ENCODE measurements at regions of chr4 and their contacts with region 1.

Region 1: GRCh38 chr4:7802093-7802726 is 137.5 kb downstream of the AFAP1 start:
- DNase-seq: peak; percentile 46 to 70
- ATAC-seq: peak; percentile 60 to 68
- H3K4me3 ChIP-seq: no peak overlapping the region
- H3K27ac ChIP-seq: peak overlapping the region in 1 of 4 donors; percentile 33
- H3K4me1 ChIP-seq: peaks cover 26 to 28% of the 10 kb centered on the region in 2 donors
- H3K27me3 ChIP-seq: no peaks in the 10 kb centered on the region
- CTCF ChIP-seq: peak; percentile 80 to 96 (median 84)
- POLR2A ChIP-seq: no peak

Region 2: DNA sequence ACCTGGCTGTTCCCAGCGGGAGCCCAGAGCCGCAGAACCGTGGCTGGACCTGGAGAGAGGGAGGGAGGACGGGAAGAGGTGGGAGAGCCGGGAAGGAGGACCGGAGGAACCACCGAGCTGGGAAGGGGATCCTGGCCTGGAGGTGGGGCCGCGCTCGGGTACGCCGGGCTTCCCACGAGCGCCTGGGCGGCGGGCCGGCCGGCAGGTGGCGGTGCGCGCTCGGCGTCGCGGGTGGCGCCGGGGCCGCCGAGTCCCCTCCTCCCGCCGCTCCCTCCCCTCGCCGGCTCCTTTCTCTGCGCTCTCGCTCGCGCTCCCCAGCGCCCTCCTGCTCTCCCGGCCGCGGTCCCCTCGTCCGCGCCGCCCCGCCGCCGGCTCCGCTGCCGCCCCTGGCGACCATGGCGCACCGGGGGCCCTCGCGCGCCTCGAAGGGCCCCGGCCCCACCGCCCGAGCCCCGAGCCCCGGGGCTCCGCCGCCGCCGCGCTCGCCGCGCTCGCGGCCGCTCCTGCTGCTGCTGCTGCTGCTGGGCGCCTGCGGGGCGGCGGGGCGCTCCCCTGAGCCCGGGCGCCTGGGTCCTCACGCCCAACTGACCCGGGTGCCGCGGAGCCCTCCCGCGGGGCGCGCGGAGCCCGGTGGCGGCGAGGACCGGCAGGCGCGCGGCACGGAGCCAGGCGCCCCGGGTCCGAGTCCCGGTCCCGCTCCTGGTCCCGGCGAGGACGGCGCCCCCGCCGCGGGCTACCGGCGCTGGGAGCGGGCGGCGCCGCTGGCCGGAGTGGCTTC is 609.8 kb before region 1 on chr4 and contains the start of gene SORCS2:
- in situ Hi-C with region 1: no loop called
- intact Hi-C with region 1: loop called (anchors 5 kb)
- DNase-seq: peak; percentile 22 to 41
- ATAC-seq: peak; percentile 91 to 92
- H3K4me3 ChIP-seq: peak within 1 kb of the TSS; percentile 27 to 44 (median 37)
- H3K27ac ChIP-seq: no peak within 1 kb of the TSS
- H3K4me1 ChIP-seq: peaks cover 6 to 7% of the 10 kb centered on the region in 2 donors
- H3K27me3 ChIP-seq: peaks cover 17 to 46% (median 26%) of the 10 kb centered on the region in 3 donors
- CTCF ChIP-seq: peak; percentile 49 to 93 (median 90)
- POLR2A ChIP-seq: no peak
- total RNA-seq, gene SORCS2: 0.07 to 1.2 (median 0.11) TPM

Region 3: DNA sequence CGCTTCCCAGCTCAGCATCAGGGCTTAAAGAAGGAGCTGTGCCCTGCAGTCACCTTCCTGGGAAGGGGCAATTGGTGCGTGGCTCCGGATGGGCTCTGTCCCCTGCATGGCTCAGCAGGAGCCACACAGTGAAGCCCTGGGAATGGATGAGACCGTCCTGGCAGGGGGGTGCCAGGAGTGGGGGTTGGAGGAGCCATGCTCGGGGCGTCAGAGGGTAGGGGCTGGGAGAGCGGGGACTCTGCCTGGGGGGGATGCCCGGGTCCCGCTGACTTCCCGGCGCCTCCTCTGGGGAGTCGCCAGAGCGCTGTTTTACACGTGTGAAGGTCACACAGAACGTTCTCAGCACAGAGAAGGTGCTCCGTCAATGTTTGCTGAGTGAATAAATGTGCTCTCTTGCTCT is 46.6 kb before region 1 on chr4:
- in situ Hi-C with region 1: no loop called
- intact Hi-C with region 1: no loop called
- DNase-seq: no peak
- ATAC-seq: no peak
- H3K4me3 ChIP-seq: no peak overlapping the region
- H3K27ac ChIP-seq: no peak overlapping the region
- H3K4me1 ChIP-seq: peaks cover 18% of the 10 kb centered on the region in 2 donors
- H3K27me3 ChIP-seq: no peaks in the 10 kb centered on the region
- CTCF ChIP-seq: no peak
- POLR2A ChIP-seq: no peak

Region 4: DNA sequence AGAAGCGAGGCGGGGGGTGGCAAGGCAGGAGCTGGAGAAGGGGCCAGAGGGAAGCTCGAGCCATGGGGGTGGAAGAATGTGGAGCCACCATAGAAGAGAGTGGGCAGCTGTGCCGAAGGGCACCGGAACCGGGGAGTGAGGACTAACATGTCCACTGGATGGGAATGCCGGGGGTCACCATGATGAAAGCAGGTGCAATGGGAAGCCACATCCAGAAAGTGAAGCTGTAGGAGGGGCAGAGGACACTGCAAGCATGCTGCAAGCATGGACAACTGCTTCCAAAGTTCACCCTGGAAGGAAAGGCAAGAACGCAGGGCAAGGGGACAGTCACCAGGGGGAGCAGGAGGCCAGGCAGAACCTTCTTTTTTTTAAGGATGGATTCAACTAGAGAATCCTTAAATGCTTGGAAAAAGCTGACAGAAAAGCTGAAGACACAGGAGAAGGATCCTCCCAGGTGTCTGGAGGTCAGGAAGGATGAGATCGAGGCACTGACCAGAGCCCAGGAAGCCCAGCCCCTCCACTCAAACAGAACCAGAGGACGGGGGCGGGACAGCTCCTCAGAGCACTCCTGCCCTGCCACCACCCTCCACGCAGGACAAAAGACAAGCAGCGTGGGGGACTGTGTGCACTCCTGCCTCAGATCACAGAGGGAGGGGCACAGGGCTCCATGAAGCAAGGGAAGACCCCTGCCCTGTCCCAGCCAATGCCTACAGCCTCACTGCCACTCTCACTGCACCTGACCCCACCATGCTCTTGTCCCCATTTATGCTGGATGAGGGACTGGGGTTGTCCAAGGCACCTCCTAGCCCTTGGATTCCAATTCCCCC is 31.8 kb before region 1 on chr4:
- in situ Hi-C with region 1: no loop called
- intact Hi-C with region 1: loop called (anchors 2 kb)
- DNase-seq: no peak
- ATAC-seq: no peak
- H3K4me3 ChIP-seq: no peak overlapping the region
- H3K27ac ChIP-seq: no peak overlapping the region
- H3K4me1 ChIP-seq: no peaks in the 10 kb centered on the region
- H3K27me3 ChIP-seq: no peaks in the 10 kb centered on the region
- CTCF ChIP-seq: peak in 3 of 5 experiments; percentile 23 to 34 (median 25)
- POLR2A ChIP-seq: no peak

Region 5: DNA sequence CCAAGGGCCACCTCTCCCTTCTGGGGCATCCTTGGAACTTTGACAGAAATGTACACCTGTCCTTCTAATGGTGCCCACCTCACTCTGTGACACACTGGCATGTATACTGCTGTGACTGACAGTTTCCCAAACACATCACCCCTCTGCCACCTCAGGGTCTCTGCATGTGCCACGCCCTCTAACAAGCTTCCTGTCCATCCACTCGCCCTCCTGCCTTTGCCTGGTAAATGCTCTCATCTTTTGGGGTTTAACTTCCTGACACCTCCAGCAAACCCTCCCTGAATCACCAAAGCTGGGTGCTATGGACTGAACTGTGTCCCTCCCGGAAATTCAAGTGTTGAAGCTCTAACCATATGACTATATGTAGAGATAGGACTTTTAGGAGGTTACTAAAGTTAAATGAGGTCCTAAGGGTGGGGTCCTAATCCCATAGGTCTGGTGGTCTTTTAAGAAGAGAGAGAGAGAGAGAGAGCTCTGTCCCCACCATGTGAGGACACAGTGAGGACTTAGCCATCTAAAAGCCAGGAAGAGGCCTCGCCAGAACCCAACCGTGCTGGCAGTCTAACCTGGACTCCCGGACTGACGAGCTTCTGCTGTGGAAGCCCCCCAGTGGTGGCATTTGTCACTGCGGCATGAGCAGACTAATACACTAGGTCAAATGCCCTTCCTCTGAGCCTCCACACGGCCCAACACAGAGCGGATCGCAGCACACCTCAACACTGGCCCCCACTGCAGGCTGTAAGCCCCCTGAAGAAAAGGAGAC is 41.8 kb after region 1 on chr4:
- in situ Hi-C with region 1: no loop called
- intact Hi-C with region 1: loop called (anchors 1 kb)
- DNase-seq: peak; percentile 41 to 78
- ATAC-seq: peak; percentile 61 to 76
- H3K4me3 ChIP-seq: no peak overlapping the region
- H3K27ac ChIP-seq: peak overlapping the region in 1 of 4 donors; percentile 74
- H3K4me1 ChIP-seq: peaks cover 0 to 6% of the 10 kb centered on the region in 2 donors
- H3K27me3 ChIP-seq: no peaks in the 10 kb centered on the region
- CTCF ChIP-seq: peak; percentile 67 to 83 (median 74)
- POLR2A ChIP-seq: no peak

Region 6: GRCh38 chr4:7924163-7924562 is 122.0 kb after region 1 on chr4:
- in situ Hi-C with region 1: loop called in 3 of 4 experiments (anchors 5 to 10 kb)
- intact Hi-C with region 1: loop called (anchors 1 kb)
- DNase-seq: no peak
- ATAC-seq: no peak
- H3K4me3 ChIP-seq: no peak overlapping the region
- H3K27ac ChIP-seq: no peak overlapping the region
- H3K4me1 ChIP-seq: peaks cover 0 to 3% of the 10 kb centered on the region in 2 donors
- H3K27me3 ChIP-seq: no peaks in the 10 kb centered on the region
- CTCF ChIP-seq: no peak
- POLR2A ChIP-seq: no peak

Region 7: DNA sequence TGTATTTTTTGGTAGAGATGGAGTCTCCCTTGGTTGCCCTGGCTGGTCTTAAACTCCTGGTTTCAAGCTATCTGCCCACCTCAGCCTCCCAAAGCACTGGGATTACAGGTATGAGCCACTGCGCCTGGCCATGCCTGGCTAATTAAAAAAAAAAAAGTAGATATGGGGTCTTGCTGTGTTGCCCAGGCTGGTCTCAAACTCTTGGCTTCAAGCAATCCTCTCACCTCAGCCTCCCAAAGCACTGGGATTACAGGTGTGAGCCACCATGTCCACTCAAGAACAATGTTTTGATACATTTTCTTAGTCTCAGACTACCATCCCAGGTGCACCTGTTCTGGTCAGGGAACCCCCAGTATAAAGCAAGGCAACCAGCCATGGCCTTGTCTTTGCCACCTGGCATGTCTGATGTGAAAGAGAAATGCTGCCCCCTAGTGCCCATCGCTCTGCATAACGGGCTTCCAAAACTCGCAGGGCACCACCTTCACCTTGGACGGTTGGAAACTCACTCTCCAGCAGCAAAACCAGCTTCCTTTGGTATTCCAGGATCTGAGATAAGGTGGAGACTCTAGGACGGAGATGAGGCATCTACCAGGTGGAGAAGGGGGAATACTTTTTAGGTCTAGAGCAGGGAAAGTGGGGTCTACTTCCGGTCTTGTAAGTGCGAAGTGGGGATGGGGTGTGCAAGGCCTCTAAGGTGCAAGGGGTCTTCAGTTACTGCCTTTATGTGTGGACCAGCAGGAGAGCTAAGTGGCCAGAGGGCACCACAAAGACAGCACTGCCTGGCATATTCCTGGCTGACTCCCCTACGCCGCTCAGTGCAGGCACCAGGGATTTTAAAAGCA is 185.2 kb after region 1 on chr4:
- in situ Hi-C with region 1: loop called in 3 of 4 experiments (anchors 5 to 25 kb)
- intact Hi-C with region 1: loop called (anchors 2 kb)
- DNase-seq: peak; percentile 35 to 75
- ATAC-seq: peak; percentile 42 to 60
- H3K4me3 ChIP-seq: no peak overlapping the region
- H3K27ac ChIP-seq: peak overlapping the region; percentile 58 to 66 (median 65)
- H3K4me1 ChIP-seq: peaks cover 19 to 21% of the 10 kb centered on the region in 2 donors
- H3K27me3 ChIP-seq: no peaks in the 10 kb centered on the region
- CTCF ChIP-seq: peak; percentile 77 to 85 (median 84)
- POLR2A ChIP-seq: no peak

Region 8: GRCh38 chr4:8428293-8429097 is 626.3 kb after region 1 on chr4:
- in situ Hi-C with region 1: loop called in 1 of 4 experiments (anchors 25 kb)
- intact Hi-C with region 1: no loop called
- DNase-seq: peak; percentile 70 to 90
- ATAC-seq: peak; percentile 94
- H3K4me3 ChIP-seq: peak overlapping the region; percentile 74 to 100 (median 86)
- H3K27ac ChIP-seq: peak overlapping the region; percentile 91 to 99 (median 93)
- H3K4me1 ChIP-seq: peaks cover 20 to 25% of the 10 kb centered on the region in 2 donors
- H3K27me3 ChIP-seq: no peaks in the 10 kb centered on the region
- CTCF ChIP-seq: peak in 3 of 5 experiments; percentile 21 to 44 (median 27)
- POLR2A ChIP-seq: peak; percentile 69 to 89